HepG2 (cell line): ENCODE measurements at regions of chr1 and their contacts with region 1.

Region 1: DNA sequence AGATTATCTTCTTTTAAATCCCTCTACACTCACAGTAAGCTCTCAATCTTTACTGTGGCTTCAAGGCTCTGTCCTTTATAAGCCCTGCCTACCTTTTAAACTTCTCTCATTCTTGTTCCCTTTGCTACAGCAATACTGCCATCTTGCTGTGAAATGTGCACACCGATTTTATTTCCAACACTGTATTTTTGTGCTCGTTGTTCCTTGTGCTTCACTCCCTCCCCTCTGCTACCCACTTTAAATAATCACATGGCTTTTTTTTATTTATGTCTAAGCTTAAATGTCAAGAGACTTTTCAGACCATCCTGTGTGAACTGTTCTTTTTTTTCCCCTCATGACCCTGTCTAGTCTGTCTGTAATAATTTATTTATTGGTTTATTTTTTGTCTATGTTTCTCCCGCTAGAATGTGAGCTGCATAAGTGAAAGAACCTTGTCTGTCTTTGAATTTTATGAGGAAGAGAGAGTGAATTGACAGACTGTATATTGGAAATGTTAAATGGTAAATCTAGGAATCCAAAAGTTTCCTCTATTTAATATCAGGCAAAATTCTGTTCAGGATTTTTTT is 45.7 kb downstream of the ABCD3 start:
- DNase-seq: peak; percentile 71
- ATAC-seq: peak; percentile 91
- H3K4me3 ChIP-seq: no peak overlapping the region
- H3K27ac ChIP-seq: peak overlapping the region; percentile 3
- H3K4me1 ChIP-seq: peaks cover 35% of the 10 kb centered on the region
- H3K27me3 ChIP-seq: no peaks in the 10 kb centered on the region
- CTCF ChIP-seq: peak; percentile 85
- EP300 ChIP-seq: no peak
- POLR2A ChIP-seq: no peak
- RAD21 ChIP-seq: peak; percentile 79

Region 2: GRCh38 chr1:94025383-94026340 is 438.2 kb before region 1 on chr1:
- CTCF ChIA-PET with region 1: interaction called, 3 read pairs
- POLR2A ChIA-PET with region 1: no interaction called
- in situ Hi-C with region 1: loop called (anchors 10 kb)
- intact Hi-C with region 1: loop called (anchors 5 kb)
- DNase-seq: peak; percentile 69
- ATAC-seq: peak; percentile 36
- H3K4me3 ChIP-seq: peak overlapping the region in 1 of 3 experiments; percentile 45; a peak in 1 of 6 replicates
- H3K27ac ChIP-seq: no peak overlapping the region
- H3K4me1 ChIP-seq: peaks cover 82% of the 10 kb centered on the region
- H3K27me3 ChIP-seq: peaks cover 0 to 6% of the 10 kb centered on the region in 2 experiments; a peak in 3 of 5 replicates
- CTCF ChIP-seq: peak; percentile 79
- EP300 ChIP-seq: no peak
- POLR2A ChIP-seq: no peak
- RAD21 ChIP-seq: peak; percentile 80

Region 3: GRCh38 chr1:94362466-94363058 is 101.3 kb before region 1 on chr1:
- CTCF ChIA-PET with region 1: no interaction called
- POLR2A ChIA-PET with region 1: no interaction called
- in situ Hi-C with region 1: no loop called
- intact Hi-C with region 1: no loop called
- DNase-seq: no peak
- ATAC-seq: no peak
- H3K4me3 ChIP-seq: no peak overlapping the region
- H3K27ac ChIP-seq: no peak overlapping the region
- H3K4me1 ChIP-seq: peaks cover 8% of the 10 kb centered on the region
- H3K27me3 ChIP-seq: no peaks in the 10 kb centered on the region
- CTCF ChIP-seq: no peak
- EP300 ChIP-seq: no peak
- POLR2A ChIP-seq: no peak
- RAD21 ChIP-seq: no peak

Region 4: DNA sequence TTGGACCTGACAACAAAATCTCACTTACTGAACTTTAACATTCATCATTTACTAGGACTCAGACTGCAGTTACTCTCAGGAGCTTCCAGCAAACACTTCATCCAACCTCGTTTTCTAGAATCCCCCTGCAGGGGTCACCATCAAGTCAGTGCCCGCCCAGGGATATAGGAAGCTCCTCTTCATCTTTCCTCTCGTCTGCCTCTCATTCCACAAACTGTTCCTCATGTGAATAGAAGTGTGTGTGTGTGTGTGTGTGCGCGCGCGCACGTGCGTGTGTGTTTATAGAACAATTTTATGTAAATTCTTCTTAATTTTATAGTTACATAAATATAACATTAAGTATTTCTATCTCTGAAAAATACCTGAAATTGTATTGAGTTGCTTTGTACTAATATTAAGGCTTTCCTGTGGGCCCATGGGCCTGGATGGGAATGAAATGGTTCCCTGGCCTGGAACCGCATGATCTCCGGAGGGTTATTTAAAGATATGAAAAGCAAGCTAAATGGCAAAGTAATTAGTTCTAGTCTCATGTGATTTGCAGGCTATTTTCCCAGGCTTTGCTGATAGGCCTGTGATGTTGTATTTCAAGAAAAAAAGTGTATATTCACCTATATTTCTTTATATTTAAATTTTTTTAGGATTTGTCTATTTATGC is 67.4 kb before region 1 on chr1:
- CTCF ChIA-PET with region 1: interaction called, 6 read pairs
- POLR2A ChIA-PET with region 1: no interaction called
- in situ Hi-C with region 1: loop called (anchors 10 kb)
- intact Hi-C with region 1: loop called (anchors 1 kb)
- DNase-seq: no peak
- ATAC-seq: peak; percentile 71; the same call in 2 of the 3 replicates
- H3K4me3 ChIP-seq: no peak overlapping the region
- H3K27ac ChIP-seq: no peak overlapping the region
- H3K4me1 ChIP-seq: peaks cover 33% of the 10 kb centered on the region
- H3K27me3 ChIP-seq: no peaks in the 10 kb centered on the region
- CTCF ChIP-seq: peak; percentile 42; the same call in 1 of the 2 replicates
- EP300 ChIP-seq: no peak
- POLR2A ChIP-seq: no peak
- RAD21 ChIP-seq: no peak

Region 5: GRCh38 chr1:94417978-94418663 is 45.7 kb before region 1 on chr1 and contains the start of gene ABCD3:
- CTCF ChIA-PET with region 1: no interaction called
- POLR2A ChIA-PET with region 1: interaction called, 12 read pairs
- in situ Hi-C with region 1: no loop called
- intact Hi-C with region 1: loop called (anchors 1 kb)
- DNase-seq: peak; percentile 93
- ATAC-seq: peak; percentile 91
- H3K4me3 ChIP-seq: peak within 1 kb of the TSS; percentile 93 to 99 (median 95)
- H3K27ac ChIP-seq: peak within 1 kb of the TSS; percentile 99
- H3K4me1 ChIP-seq: peaks cover 56% of the 10 kb centered on the region
- H3K27me3 ChIP-seq: no peaks in the 10 kb centered on the region; a peak in 1 of 5 replicates
- CTCF ChIP-seq: peak; percentile 32
- EP300 ChIP-seq: peak; percentile 65 to 72; a peak in 2 of 4 replicates
- POLR2A ChIP-seq: peak; percentile 74 to 88; a peak in 3 of 4 replicates
- RAD21 ChIP-seq: peak; percentile 35
- total RNA-seq, gene ABCD3: 166 and 190 TPM in 2 replicates

Region 6: DNA sequence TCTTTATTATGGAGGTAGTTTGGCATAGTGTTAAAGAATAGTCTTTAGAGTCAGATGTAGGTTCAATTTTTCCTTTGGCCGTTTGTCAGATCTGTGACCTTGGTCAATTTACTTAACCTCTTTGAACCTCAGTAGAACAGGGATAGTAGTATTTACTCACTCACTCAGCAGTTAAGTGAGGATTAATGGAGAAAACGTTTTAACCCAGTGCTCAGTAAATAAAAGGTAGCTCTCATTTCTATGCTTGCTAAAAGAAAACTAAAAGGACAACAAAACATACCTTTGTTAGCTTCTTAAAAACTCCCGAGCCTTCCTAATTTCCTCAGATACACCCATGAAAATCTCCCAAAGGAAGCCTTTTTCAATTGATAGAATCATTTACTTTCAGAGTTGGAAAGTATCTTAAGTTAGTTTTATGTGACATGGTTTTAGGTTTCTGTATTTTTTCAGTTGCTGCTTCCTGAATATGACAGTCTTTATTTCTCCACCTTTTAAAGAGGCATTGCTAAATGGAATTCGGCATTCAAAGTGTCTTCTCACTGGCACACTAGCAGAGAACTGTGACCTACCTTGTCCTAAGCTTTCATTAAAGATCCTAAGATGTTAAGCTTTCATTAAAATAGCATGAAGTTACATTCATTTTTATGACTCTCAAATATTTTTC is 37.9 kb before region 1 on chr1:
- CTCF ChIA-PET with region 1: no interaction called
- POLR2A ChIA-PET with region 1: no interaction called
- in situ Hi-C with region 1: no loop called
- intact Hi-C with region 1: loop called (anchors 2 kb)
- DNase-seq: peak; percentile 96
- ATAC-seq: peak; percentile 88
- H3K4me3 ChIP-seq: peak overlapping the region; percentile 34 to 53 (median 48)
- H3K27ac ChIP-seq: peak overlapping the region; percentile 84
- H3K4me1 ChIP-seq: peaks cover 98% of the 10 kb centered on the region
- H3K27me3 ChIP-seq: no peaks in the 10 kb centered on the region
- CTCF ChIP-seq: no peak
- EP300 ChIP-seq: peak in 1 of 2 experiments; percentile 97; a peak in 3 of 4 replicates
- POLR2A ChIP-seq: no peak
- RAD21 ChIP-seq: no peak